PC-9 (cell line): ENCODE measurements at regions of chr1 and their contacts with region 1.

Region 1: DNA sequence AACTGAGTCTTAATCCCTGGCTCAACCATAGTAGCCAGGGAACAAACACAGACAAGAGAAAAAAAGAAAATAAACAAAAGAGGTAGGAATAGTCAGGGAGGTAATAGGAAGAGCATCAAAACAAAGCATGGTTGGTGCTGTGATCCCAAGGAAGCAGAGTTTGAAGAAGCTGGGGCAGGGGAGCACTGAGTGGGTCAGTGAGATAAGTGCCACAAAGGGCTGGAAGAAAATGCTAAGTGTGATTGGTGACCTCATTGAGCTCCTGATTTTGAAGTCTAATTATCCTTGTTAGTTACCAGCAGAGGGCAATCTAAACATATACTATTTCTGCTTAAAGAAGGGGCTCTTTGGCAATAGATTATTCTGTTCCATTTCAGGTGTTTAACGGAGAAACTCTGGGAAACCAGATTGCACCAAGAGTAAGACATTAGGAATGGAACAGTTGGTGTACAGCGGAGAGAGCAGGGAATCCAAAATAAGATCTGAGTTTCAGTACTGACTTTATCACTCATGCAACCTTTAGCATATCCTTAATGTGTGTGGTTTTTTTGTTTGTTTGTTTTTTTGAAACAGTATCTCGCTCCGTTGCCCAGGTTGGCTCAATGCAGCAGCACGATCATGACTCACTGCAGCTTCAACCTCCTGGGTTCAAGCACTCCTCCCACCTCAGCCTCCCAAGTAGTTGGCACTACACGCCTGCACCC is 30.7 kb upstream of the KIAA1614 start:
- DNase-seq: peak; percentile 1 to 53
- H3K4me3 ChIP-seq: no peak overlapping the region
- H3K27ac ChIP-seq: no peak overlapping the region
- H3K4me1 ChIP-seq: no peaks in the 10 kb centered on the region
- H3K27me3 ChIP-seq: no peaks in the 10 kb centered on the region
- CTCF ChIP-seq: peak; percentile 75

Region 2: DNA sequence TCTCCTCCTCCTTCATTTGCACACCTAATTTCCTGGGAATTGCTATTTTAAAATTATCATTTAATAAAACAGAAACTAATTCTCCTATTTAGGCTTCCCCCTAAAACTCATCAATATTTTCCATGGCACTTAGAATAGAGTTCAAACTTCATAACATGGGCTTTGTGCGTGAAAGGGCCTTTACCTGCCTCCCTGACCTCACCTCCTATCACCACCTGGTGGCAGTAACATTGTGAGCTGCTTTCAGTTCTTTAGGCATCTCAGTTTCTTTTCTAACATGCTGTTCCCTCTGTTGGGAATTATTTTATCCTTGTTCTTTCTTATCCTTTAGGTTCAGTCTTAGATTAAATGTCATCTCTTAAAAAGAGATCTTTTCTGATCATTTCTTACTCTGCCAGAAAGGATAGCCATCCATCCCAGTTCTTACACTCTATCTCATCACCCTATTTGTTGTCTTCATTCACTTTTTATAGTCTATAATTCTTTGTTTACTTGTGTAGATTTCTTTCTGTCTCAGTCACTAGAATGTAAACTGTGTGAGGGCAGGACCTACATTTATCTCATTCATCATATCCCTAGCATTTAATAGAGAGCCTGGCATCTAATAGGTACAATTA is 103.1 kb before region 1 on chr1:
- CTCF ChIA-PET with region 1: no interaction called
- POLR2A ChIA-PET with region 1: no interaction called
- intact Hi-C with region 1: no loop called
- DNase-seq: no peak
- H3K4me3 ChIP-seq: no peak overlapping the region
- H3K27ac ChIP-seq: no peak overlapping the region
- H3K4me1 ChIP-seq: no peaks in the 10 kb centered on the region
- H3K27me3 ChIP-seq: no peaks in the 10 kb centered on the region
- CTCF ChIP-seq: peak; percentile 60; the same call in 1 of the 2 replicates

Region 3: GRCh38 chr1:181021811-181022434 is 140.0 kb after region 1 on chr1:
- CTCF ChIA-PET with region 1: interaction called, 12 read pairs
- POLR2A ChIA-PET with region 1: no interaction called
- intact Hi-C with region 1: no loop called
- DNase-seq: peak; percentile 54 to 64
- H3K4me3 ChIP-seq: peak overlapping the region; percentile 63
- H3K27ac ChIP-seq: peak overlapping the region; percentile 62
- H3K4me1 ChIP-seq: peaks cover 18% of the 10 kb centered on the region
- H3K27me3 ChIP-seq: no peaks in the 10 kb centered on the region
- CTCF ChIP-seq: no peak

Region 4: DNA sequence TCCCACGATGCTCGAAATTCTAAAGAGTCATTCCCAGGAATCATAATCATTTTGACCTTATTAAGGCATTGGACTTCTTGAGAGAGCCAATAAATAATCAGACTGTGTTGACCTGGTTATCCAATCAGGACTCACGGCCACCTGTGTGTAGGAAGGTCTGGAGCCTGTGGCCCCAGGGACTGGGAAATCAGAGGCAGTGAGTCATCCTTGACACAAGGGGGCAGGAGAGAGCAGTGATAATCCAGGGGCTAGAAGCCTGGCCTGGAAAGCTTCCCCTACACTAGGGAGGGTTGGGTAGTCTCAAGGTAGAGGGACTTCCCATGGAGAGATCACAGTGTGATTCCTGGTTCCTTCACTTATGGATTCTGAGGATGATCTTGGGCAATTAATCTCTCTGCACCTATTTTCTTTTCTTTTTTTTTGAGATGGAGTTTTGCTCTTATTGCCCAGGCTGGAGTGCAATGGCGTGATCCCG is 156.5 kb after region 1 on chr1:
- CTCF ChIA-PET with region 1: interaction called, 3 read pairs
- POLR2A ChIA-PET with region 1: no interaction called
- intact Hi-C with region 1: loop called (anchors 1 kb)
- DNase-seq: peak; percentile 60 to 62
- H3K4me3 ChIP-seq: no peak overlapping the region
- H3K27ac ChIP-seq: no peak overlapping the region
- H3K4me1 ChIP-seq: peaks cover 21% of the 10 kb centered on the region
- H3K27me3 ChIP-seq: no peaks in the 10 kb centered on the region
- CTCF ChIP-seq: peak; percentile 82

Region 5: GRCh38 chr1:181166377-181167196 is 284.6 kb after region 1 on chr1:
- CTCF ChIA-PET with region 1: interaction called, 15 read pairs
- POLR2A ChIA-PET with region 1: interaction called, 6 read pairs
- intact Hi-C with region 1: loop called (anchors 1 kb)
- DNase-seq: peak; percentile 58 to 62
- H3K4me3 ChIP-seq: no peak overlapping the region
- H3K27ac ChIP-seq: no peak overlapping the region
- H3K4me1 ChIP-seq: no peaks in the 10 kb centered on the region
- H3K27me3 ChIP-seq: no peaks in the 10 kb centered on the region
- CTCF ChIP-seq: peak; percentile 88

Region 6: DNA sequence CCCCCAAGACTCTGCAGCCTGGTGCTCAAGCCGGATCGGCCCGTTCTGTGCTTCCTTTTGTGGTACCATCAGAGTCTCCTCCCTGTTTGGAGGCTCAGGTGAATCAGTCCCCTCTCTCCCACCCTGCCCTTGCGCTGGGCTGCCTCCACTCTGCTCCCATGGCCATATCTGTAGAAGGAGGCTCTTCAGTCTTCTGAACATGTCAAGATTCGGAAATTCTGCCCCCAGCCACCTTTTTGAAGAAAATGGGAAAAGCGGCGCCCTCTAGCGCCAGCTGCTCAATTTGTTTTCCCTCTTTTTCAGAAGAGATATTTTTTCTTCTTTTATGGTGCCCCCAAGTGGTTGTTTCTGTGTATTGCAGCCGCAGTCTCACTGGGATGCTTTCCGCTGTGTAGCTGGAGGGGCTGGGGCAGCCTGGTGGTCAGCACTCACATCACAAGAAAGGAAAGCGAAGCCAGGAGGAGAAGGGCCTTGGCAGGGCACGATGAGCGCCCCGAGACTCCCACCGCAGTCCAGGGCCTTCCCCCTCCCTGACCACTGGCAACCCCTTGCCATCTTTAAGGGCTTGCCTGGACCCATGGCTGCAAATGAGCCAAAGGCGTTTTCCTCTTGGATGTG is 542.9 kb after region 1 on chr1:
- CTCF ChIA-PET with region 1: interaction called, 6 read pairs
- POLR2A ChIA-PET with region 1: no interaction called
- intact Hi-C with region 1: loop called (anchors 1 kb)
- DNase-seq: peak; percentile 37 to 60
- H3K4me3 ChIP-seq: no peak overlapping the region
- H3K27ac ChIP-seq: no peak overlapping the region
- H3K4me1 ChIP-seq: no peaks in the 10 kb centered on the region
- H3K27me3 ChIP-seq: peaks cover 15% of the 10 kb centered on the region; the same call in 1 of the 2 replicates
- CTCF ChIP-seq: peak; percentile 98